B cell (primary cell): ENCODE measurements at regions of chr6 and their contacts with region 1.

Region 1: GRCh38 chr6:151014404-151015100 is 149.1 kb downstream of the MTHFD1L start:
- DNase-seq: peak; percentile 72
- ATAC-seq: peak; percentile 76
- H3K4me3 ChIP-seq: no peak overlapping the region
- H3K4me3 Mint-ChIP-seq: peak overlapping the region; percentile 41
- H3K27ac ChIP-seq: no peak overlapping the region
- H3K27ac Mint-ChIP-seq: no peak overlapping the region
- H3K4me1 ChIP-seq: peaks cover 0 to 4% of the 10 kb centered on the region in 2 donors
- H3K4me1 Mint-ChIP-seq: peaks cover 3% of the 10 kb centered on the region
- H3K27me3 ChIP-seq: no peaks in the 10 kb centered on the region
- H3K27me3 Mint-ChIP-seq: no peaks in the 10 kb centered on the region
- CTCF ChIP-seq: peak; percentile 99

Region 2: DNA sequence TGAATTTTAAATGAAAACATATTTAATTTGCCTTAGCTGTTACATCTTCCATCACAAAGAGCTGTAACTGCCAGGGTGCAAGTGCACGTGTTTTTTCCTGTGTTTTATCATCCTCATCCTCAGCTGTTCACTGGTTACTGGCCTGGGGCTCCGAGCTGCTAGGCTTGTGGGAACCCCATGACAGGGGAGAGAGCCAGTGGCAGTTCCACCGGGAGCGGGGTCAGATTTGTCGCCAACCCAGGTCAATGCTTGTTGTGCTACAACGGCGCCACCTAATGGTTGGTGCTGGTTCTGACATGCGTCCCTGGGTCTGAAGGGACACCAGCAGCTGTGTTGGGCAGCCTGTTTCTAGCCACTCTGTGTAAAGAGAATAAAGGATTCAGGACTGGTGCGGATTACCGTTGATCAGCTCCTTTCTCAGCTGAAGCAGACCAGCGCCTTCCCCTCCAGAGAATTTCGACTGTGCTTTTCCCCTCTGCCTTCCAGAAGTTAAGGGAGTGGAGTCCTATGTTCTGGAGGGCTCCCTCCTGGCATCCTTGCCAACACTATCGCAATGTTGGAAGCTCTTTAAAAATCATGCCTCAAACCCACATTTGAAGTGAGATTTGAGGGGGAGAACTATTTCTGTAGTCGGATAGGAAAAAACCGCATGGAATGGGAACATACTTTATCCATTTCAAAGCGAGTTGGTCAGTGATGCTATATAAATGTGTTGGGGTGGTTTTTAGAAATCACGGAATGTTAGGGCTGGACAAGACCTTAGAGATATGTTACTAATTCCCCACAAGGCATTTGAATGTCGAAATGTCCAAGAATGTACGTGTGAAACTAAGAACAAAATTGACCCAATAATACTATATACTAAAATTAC is 1582.4 kb before region 1 on chr6:
- CTCF ChIA-PET with region 1: no interaction called
- POLR2A ChIA-PET with region 1: no interaction called
- intact Hi-C with region 1: no loop called
- DNase-seq: peak; percentile 87
- ATAC-seq: peak; percentile 92
- H3K4me3 ChIP-seq: no peak overlapping the region
- H3K4me3 Mint-ChIP-seq: peak overlapping the region; percentile 49
- H3K27ac ChIP-seq: no peak overlapping the region
- H3K27ac Mint-ChIP-seq: no peak overlapping the region
- H3K4me1 ChIP-seq: peaks cover 0 to 7% of the 10 kb centered on the region in 2 donors
- H3K4me1 Mint-ChIP-seq: peaks cover 7% of the 10 kb centered on the region
- H3K27me3 ChIP-seq: no peaks in the 10 kb centered on the region
- H3K27me3 Mint-ChIP-seq: no peaks in the 10 kb centered on the region
- CTCF ChIP-seq: peak; percentile 96

Region 3: DNA sequence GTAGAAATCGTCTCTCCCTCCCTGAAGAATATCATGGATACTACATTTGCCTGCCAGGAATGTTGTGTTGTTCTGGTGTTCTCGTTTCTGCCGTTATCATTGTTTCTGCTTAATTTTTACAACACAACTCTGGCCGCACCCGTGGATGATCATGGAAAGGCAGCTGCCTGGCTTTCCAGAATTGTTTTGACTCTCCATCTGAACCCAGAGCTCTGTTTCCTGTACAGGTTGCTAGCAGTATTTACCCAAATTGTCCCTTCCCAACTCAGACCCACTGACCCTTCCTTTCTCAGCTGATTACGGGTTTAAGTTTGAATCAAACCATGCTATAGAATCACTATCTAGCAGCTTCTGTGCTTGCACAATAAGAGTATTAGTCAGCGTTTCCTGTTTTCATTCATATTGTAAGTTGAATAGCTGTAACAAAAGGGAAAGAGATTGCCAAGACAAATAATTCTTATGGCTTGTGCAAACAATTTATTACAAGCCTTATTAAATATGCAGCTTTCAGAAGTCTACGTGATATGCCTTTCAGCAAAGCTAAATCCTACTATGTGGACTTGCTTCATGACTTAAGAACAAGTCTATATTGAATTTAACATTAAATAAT is 10.0 kb before region 1 on chr6:
- CTCF ChIA-PET with region 1: interaction called, 19 read pairs
- POLR2A ChIA-PET with region 1: no interaction called
- intact Hi-C with region 1: no loop called
- DNase-seq: no peak
- ATAC-seq: no peak
- H3K4me3 ChIP-seq: no peak overlapping the region
- H3K4me3 Mint-ChIP-seq: no peak overlapping the region
- H3K27ac ChIP-seq: no peak overlapping the region
- H3K27ac Mint-ChIP-seq: no peak overlapping the region
- H3K4me1 ChIP-seq: no peaks in the 10 kb centered on the region
- H3K4me1 Mint-ChIP-seq: peaks cover 3% of the 10 kb centered on the region
- H3K27me3 ChIP-seq: no peaks in the 10 kb centered on the region
- H3K27me3 Mint-ChIP-seq: no peaks in the 10 kb centered on the region
- CTCF ChIP-seq: no peak

Region 4: GRCh38 chr6:151027772-151028487 is 13.4 kb after region 1 on chr6:
- CTCF ChIA-PET with region 1: interaction called, 17 read pairs
- POLR2A ChIA-PET with region 1: no interaction called
- intact Hi-C with region 1: no loop called
- DNase-seq: no peak
- ATAC-seq: no peak
- H3K4me3 ChIP-seq: no peak overlapping the region
- H3K4me3 Mint-ChIP-seq: no peak overlapping the region
- H3K27ac ChIP-seq: no peak overlapping the region
- H3K27ac Mint-ChIP-seq: no peak overlapping the region
- H3K4me1 ChIP-seq: no peaks in the 10 kb centered on the region
- H3K4me1 Mint-ChIP-seq: no peaks in the 10 kb centered on the region
- H3K27me3 ChIP-seq: no peaks in the 10 kb centered on the region
- H3K27me3 Mint-ChIP-seq: no peaks in the 10 kb centered on the region
- CTCF ChIP-seq: no peak

Region 5: GRCh38 chr6:151323791-151324487 is 309.4 kb after region 1 on chr6:
- CTCF ChIA-PET with region 1: interaction called, 100 read pairs
- POLR2A ChIA-PET with region 1: no interaction called
- intact Hi-C with region 1: loop called (anchors 1 kb)
- DNase-seq: peak; percentile 77
- ATAC-seq: peak; percentile 80
- H3K4me3 ChIP-seq: no peak overlapping the region
- H3K4me3 Mint-ChIP-seq: peak overlapping the region; percentile 80
- H3K27ac ChIP-seq: no peak overlapping the region
- H3K27ac Mint-ChIP-seq: peak overlapping the region; percentile 21
- H3K4me1 ChIP-seq: peaks cover 19 to 20% of the 10 kb centered on the region in 2 donors
- H3K4me1 Mint-ChIP-seq: peaks cover 26% of the 10 kb centered on the region
- H3K27me3 ChIP-seq: peaks cover 0 to 18% (median 1%) of the 10 kb centered on the region in 4 experiments
- H3K27me3 Mint-ChIP-seq: peaks cover 62% of the 10 kb centered on the region
- CTCF ChIP-seq: peak; percentile 98

Region 6: GRCh38 chr6:151330134-151330696 is 315.7 kb after region 1 on chr6:
- CTCF ChIA-PET with region 1: interaction called, 100 read pairs
- POLR2A ChIA-PET with region 1: no interaction called
- intact Hi-C with region 1: no loop called
- DNase-seq: no peak
- ATAC-seq: no peak
- H3K4me3 ChIP-seq: no peak overlapping the region
- H3K4me3 Mint-ChIP-seq: no peak overlapping the region
- H3K27ac ChIP-seq: no peak overlapping the region
- H3K27ac Mint-ChIP-seq: no peak overlapping the region
- H3K4me1 ChIP-seq: peaks cover 9 to 10% of the 10 kb centered on the region in 2 donors
- H3K4me1 Mint-ChIP-seq: peaks cover 14% of the 10 kb centered on the region
- H3K27me3 ChIP-seq: peaks cover 0 to 8% (median 1%) of the 10 kb centered on the region in 4 experiments
- H3K27me3 Mint-ChIP-seq: peaks cover 47% of the 10 kb centered on the region
- CTCF ChIP-seq: no peak

Region 7: DNA sequence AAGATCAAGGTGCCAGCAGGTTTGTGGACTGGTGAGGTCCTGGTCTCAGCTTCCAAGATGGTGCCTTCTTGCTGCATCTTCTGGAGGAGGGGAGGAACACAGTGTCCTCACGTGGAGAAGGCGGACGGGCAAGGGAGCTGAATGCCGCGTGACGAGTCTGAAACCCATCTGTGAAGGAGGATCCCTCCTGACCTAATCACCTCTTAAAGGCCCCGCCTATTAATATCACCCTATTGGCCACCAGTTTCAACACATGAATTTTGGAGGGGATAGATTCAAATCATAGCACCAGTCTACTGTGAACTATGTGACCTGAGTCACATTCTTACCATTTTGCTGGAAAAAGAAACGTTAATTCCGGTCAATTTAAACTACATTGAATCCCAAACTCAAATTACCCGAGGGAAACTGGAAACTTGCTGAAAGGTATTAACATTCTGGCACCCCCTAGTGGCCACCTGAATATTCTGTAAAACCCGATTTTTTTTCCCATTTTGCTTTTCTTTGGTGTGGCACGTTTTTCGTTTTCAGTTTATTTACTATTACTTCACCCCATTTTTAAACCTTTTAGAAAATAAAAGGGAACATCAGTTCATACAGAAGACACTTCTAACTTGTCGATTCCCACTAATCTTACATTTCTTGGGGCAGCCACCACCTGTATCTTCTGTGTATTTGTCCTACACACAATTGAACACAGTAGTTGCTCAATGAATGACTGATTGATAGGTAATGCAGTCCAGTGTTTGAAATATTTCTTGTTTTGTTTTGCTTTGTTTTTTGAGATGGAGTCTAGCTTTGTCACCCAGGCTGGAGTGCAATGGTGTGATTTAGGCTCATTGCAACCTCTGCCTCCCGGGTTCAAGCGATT is 461.3 kb after region 1 on chr6:
- CTCF ChIA-PET with region 1: interaction called, 5 read pairs
- POLR2A ChIA-PET with region 1: no interaction called
- intact Hi-C with region 1: loop called (anchors 2 kb)
- DNase-seq: peak; percentile 68
- ATAC-seq: peak; percentile 43
- H3K4me3 ChIP-seq: peak overlapping the region in 2 of 5 experiments; percentile 11 to 23
- H3K4me3 Mint-ChIP-seq: peak overlapping the region; percentile 55
- H3K27ac ChIP-seq: no peak overlapping the region
- H3K27ac Mint-ChIP-seq: no peak overlapping the region
- H3K4me1 ChIP-seq: peaks cover 0 to 6% of the 10 kb centered on the region in 2 donors
- H3K4me1 Mint-ChIP-seq: peaks cover 11% of the 10 kb centered on the region
- H3K27me3 ChIP-seq: no peaks in the 10 kb centered on the region
- H3K27me3 Mint-ChIP-seq: no peaks in the 10 kb centered on the region
- CTCF ChIP-seq: peak; percentile 92